Activated B cell treated with CpG ODN at 0.5 μM for 24 hours (primary cell): ENCODE measurements at regions of chr11 and their contacts with region 1.

Region 1: DNA sequence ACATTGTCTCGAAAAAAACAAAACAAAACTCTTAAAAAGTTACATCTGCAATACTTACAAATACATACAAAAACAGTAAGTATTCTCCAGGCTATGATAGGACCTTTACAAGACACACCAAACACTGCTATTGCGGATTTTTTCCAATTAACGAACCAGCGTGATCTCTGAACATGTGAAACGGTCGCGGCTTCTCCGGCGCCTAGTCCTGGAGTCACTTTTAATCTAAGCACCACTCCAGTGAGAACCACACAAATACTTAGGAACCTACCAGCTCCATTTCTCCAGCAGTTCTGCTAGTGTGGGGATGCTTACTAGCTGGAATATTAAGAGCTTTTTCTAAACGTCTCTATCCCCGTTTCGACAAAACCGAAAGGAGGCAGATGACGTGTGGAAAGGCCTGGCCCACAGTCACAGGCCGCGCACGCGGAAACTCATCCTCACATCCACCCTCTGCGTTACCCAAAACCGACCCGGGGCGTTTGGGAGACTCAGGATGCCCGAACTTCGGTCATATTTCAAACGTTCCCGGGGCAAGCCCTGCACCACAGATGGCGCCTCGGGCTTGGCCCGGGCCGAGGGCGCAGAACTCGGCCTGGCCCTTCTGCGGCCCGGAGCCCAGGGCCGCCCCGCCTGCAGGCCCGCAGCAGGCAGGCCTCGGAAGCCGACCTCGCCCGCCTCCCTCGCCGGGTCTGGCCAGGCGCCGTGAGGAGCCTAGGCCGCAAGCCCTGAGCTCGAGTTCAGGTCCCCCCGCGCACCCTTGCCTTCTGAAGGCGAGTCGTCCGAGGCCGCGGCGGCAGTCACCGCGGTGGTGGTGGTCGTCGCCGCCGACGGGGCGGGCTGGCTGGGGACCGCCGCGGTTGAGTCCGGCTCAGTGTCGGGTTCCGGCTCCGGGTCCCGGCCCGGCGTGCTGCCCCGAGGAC is 575 bp downstream of the FNBP4 start:
- DNase-seq: peak; percentile 63
- ATAC-seq: peak; percentile 20
- H3K4me3 Mint-ChIP-seq: peak overlapping the region; percentile 97
- H3K27ac Mint-ChIP-seq: peak overlapping the region; percentile 100
- H3K4me1 Mint-ChIP-seq: peaks cover 33% of the 10 kb centered on the region
- H3K27me3 Mint-ChIP-seq: no peaks in the 10 kb centered on the region
- CTCF ChIP-seq: no peak

Region 2: GRCh38 chr11:47565340-47566148 is 201.0 kb before region 1 on chr11 and contains the start of gene PTPMT1:
- CTCF ChIA-PET with region 1: no interaction called
- POLR2A ChIA-PET with region 1: interaction called, 10 read pairs
- intact Hi-C with region 1: no loop called
- DNase-seq: peak; percentile 66
- ATAC-seq: peak; percentile 95
- H3K4me3 Mint-ChIP-seq: peak within 1 kb of the TSS; percentile 84
- H3K27ac Mint-ChIP-seq: peak within 1 kb of the TSS; percentile 54
- H3K4me1 Mint-ChIP-seq: peaks cover 18% of the 10 kb centered on the region
- H3K27me3 Mint-ChIP-seq: no peaks in the 10 kb centered on the region
- CTCF ChIP-seq: no peak
- total RNA-seq, gene PTPMT1: 27.1 and 32.8 TPM in 2 replicates

Region 3: DNA sequence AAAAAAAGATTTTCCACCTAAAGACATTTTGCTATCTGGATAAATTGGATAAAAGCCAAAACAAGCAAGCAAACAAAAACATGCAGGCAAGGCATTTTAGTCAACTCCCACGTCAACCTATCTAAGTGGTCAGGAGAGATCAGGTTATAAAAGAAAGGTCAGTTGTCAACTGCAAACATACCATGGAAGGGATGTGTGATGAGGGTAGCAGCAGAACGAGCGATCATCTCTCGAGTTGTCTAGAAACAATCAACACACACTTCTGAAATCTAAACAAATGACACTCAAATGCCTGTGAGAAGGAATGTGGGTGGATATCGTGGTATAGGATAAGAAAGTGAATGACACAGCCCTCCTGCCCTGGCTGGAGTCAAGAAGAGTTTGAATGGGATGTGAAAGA is 135.1 kb before region 1 on chr11:
- CTCF ChIA-PET with region 1: no interaction called
- POLR2A ChIA-PET with region 1: interaction called, 10 read pairs
- intact Hi-C with region 1: no loop called
- DNase-seq: no peak
- ATAC-seq: no peak
- H3K4me3 Mint-ChIP-seq: no peak overlapping the region
- H3K27ac Mint-ChIP-seq: no peak overlapping the region
- H3K4me1 Mint-ChIP-seq: no peaks in the 10 kb centered on the region
- H3K27me3 Mint-ChIP-seq: no peaks in the 10 kb centered on the region
- CTCF ChIP-seq: no peak

Region 4: GRCh38 chr11:47642099-47642855 is 124.3 kb before region 1 on chr11 and contains the start of gene MTCH2:
- CTCF ChIA-PET with region 1: no interaction called
- POLR2A ChIA-PET with region 1: interaction called, 5 read pairs
- intact Hi-C with region 1: loop called (anchors 1 kb)
- DNase-seq: peak; percentile 95
- ATAC-seq: peak; percentile 94
- H3K4me3 Mint-ChIP-seq: peak within 1 kb of the TSS; percentile 94
- H3K27ac Mint-ChIP-seq: peak within 1 kb of the TSS; percentile 95
- H3K4me1 Mint-ChIP-seq: peaks cover 25% of the 10 kb centered on the region
- H3K27me3 Mint-ChIP-seq: no peaks in the 10 kb centered on the region
- CTCF ChIP-seq: no peak
- total RNA-seq, gene MTCH2: 73.3 and 81.7 TPM in 2 replicates

Region 5: GRCh38 chr11:47715082-47715669 is 51.4 kb before region 1 on chr11 and contains the start of gene AGBL2:
- CTCF ChIA-PET with region 1: no interaction called
- POLR2A ChIA-PET with region 1: interaction called, 11 read pairs
- intact Hi-C with region 1: loop called (anchors 2 kb)
- DNase-seq: peak; percentile 82
- ATAC-seq: peak; percentile 99
- H3K4me3 Mint-ChIP-seq: peak within 1 kb of the TSS; percentile 96
- H3K27ac Mint-ChIP-seq: peak within 1 kb of the TSS; percentile 97
- H3K4me1 Mint-ChIP-seq: peaks cover 11% of the 10 kb centered on the region
- H3K27me3 Mint-ChIP-seq: no peaks in the 10 kb centered on the region
- CTCF ChIP-seq: no peak
- total RNA-seq, gene AGBL2: 7.0 and 8.2 TPM in 2 replicates

Region 6: GRCh38 chr11:47863189-47863892 is 96.8 kb after region 1 on chr11:
- CTCF ChIA-PET with region 1: no interaction called
- POLR2A ChIA-PET with region 1: interaction called, 10 read pairs
- intact Hi-C with region 1: no loop called
- DNase-seq: no peak
- ATAC-seq: peak; percentile 69
- H3K4me3 Mint-ChIP-seq: peak overlapping the region; percentile 56
- H3K27ac Mint-ChIP-seq: peak overlapping the region; percentile 91
- H3K4me1 Mint-ChIP-seq: peaks cover 84% of the 10 kb centered on the region
- H3K27me3 Mint-ChIP-seq: no peaks in the 10 kb centered on the region
- CTCF ChIP-seq: no peak